ENCODE measurements at regions of chr22 and their contacts with region 1.

Region 1: GRCh38 chr22:31290494-31291471 is 1.5 kb downstream of the PIK3IP1 start:
- DNase-seq: peak; percentile 96
- H3K4me3 Mint-ChIP-seq: peak overlapping the region; percentile 98
- H3K27ac Mint-ChIP-seq: peak overlapping the region; percentile 100
- H3K4me1 Mint-ChIP-seq: peaks cover 63% of the 10 kb centered on the region
- H3K27me3 Mint-ChIP-seq: no peaks in the 10 kb centered on the region

Region 2: DNA sequence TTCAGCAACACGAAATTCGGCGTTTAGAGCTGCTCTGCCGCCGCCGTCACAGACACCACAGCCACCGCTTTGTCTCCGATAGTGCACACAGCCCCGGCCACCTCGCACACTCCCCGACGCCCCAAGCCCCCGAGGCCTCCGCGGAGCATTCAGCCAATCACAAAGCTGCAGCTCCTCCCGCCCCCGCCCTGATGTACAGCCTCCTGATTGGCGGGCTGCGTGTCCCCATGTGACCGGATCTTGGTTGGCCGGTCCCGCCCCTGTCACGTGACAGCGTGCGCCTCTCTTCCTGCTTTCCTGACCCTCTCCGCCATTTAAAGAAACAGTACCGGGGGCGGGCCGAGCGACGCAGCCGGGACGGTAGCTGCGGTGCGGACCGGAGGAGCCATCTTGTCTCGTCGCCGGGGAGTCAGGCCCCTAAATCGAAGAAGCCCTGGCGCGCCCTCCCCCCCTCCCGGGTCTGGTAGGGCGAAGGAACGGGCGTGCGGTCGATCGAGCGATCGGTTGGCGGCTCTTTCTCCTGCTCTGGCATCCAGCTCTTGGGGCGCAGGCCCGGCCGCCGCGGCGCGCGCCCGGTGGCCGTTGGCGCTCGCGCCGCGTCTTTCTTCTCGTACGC is 321.8 kb before region 1 on chr22 and contains the start of gene TUG1:
- CTCF ChIA-PET with region 1: no interaction called
- POLR2A ChIA-PET with region 1: no interaction called
- intact Hi-C with region 1: loop called (anchors 5 kb)
- DNase-seq: peak; percentile 98
- H3K4me3 Mint-ChIP-seq: peak within 1 kb of the TSS; percentile 85
- H3K27ac Mint-ChIP-seq: peak within 1 kb of the TSS; percentile 89
- H3K4me1 Mint-ChIP-seq: peaks cover 64% of the 10 kb centered on the region
- H3K27me3 Mint-ChIP-seq: peaks cover 1% of the 10 kb centered on the region
- total RNA-seq, gene TUG1: 35.6 to 38.3 TPM

Region 3: GRCh38 chr22:31160328-31160978 is 130.3 kb before region 1 on chr22:
- CTCF ChIA-PET with region 1: interaction called, 4 read pairs
- POLR2A ChIA-PET with region 1: no interaction called
- intact Hi-C with region 1: loop called (anchors 5 kb)
- DNase-seq: peak; percentile 29
- H3K4me3 Mint-ChIP-seq: peak overlapping the region; percentile 99
- H3K27ac Mint-ChIP-seq: peak overlapping the region; percentile 97
- H3K4me1 Mint-ChIP-seq: peaks cover 34% of the 10 kb centered on the region
- H3K27me3 Mint-ChIP-seq: no peaks in the 10 kb centered on the region

Region 4: GRCh38 chr22:31278622-31279326 is 12.0 kb before region 1 on chr22:
- CTCF ChIA-PET with region 1: interaction called, 55 read pairs
- POLR2A ChIA-PET with region 1: interaction called, 31 read pairs
- intact Hi-C with region 1: loop called (anchors 1 kb)
- DNase-seq: peak; percentile 60
- H3K4me3 Mint-ChIP-seq: no peak overlapping the region
- H3K27ac Mint-ChIP-seq: peak overlapping the region; percentile 96
- H3K4me1 Mint-ChIP-seq: peaks cover 68% of the 10 kb centered on the region
- H3K27me3 Mint-ChIP-seq: no peaks in the 10 kb centered on the region

Region 5: DNA sequence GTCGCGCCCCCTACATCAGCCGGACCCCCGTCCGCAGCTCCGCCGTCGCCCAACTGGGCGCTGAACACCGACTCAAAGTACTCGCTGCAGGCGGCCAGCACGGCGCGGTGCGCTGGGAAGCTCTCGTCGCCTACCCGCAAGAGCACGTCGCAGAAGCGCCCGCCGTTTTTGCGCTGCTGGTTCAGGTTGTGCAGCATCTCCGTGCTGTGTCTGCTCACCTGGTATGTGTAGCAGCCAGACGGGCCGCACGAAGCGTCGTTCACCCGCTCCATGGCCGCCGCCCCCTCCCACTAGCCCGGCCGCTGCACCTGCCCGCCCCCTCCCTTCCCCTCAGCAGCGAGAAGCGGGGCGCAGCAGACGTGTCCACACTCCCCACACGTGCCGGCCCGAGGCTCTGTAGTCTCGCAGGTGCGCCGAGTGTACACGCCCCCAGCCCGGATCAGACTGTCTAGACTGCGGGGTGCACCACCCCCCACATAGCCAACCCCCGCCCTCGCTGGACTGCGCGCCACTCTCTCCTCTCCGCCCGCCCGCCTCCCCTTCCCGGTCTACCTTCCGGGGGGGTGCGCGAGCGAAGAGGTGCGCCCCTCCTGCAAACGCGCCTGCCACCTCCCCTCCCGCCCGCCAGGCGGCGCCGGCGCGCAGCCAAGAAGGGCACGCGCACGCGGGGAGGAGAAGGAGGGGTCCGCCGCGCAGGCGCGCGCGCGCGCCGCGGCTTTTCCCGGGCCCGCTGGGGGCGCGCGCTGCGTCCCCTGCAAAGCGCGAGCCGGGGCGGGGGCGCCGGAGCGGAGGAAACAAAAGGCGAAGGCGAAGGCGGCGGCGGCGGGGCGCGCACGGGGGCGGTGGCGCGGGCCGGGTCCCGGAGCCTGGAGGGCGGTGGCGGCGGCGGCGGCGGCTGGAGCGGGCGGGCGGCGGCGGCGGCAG is 54.8 kb after region 1 on chr22:
- CTCF ChIA-PET with region 1: interaction called, 8 read pairs
- POLR2A ChIA-PET with region 1: interaction called, 9 read pairs
- intact Hi-C with region 1: loop called (anchors 1 kb)
- DNase-seq: peak; percentile 91
- H3K4me3 Mint-ChIP-seq: peak overlapping the region; percentile 89
- H3K27ac Mint-ChIP-seq: peak overlapping the region; percentile 91
- H3K4me1 Mint-ChIP-seq: peaks cover 46% of the 10 kb centered on the region
- H3K27me3 Mint-ChIP-seq: no peaks in the 10 kb centered on the region

Region 6: GRCh38 chr22:31537019-31537535 is 246.3 kb after region 1 on chr22:
- CTCF ChIA-PET with region 1: no interaction called
- POLR2A ChIA-PET with region 1: no interaction called
- intact Hi-C with region 1: loop called (anchors 5 kb)
- DNase-seq: peak; percentile 80
- H3K4me3 Mint-ChIP-seq: peak overlapping the region; percentile 2
- H3K27ac Mint-ChIP-seq: peak overlapping the region; percentile 97
- H3K4me1 Mint-ChIP-seq: peaks cover 69% of the 10 kb centered on the region
- H3K27me3 Mint-ChIP-seq: no peaks in the 10 kb centered on the region

Measured in activated CD4-positive, alpha-beta memory T cell treated with anti-CD3 and anti-CD28 coated beads for 36 hours (primary cell).